AG04450 (cell line): ENCODE measurements at regions of chr1 and their contacts with region 1.

Region 1: DNA sequence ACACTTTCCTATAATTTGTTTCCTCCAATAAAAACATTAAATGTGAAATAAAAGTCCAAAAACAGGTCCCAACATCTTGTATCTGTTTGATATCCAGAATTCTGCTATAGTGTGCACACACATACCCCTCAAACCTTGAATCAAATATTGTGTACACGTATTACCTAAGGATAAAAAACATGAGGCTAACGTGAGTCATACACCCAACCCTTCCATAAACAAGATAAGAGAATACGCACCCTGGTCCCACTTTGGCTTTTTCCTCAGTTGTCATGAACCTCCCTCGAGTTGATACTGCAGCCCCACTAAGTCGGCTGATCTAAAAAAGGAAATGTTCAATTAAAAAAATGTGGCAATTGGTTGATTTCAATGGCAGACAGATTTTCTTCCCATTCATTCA is 5.2 kb downstream of the KHDC4 start:
- DNase-seq: no peak
- H3K4me3 ChIP-seq: no peak overlapping the region
- H3K27ac ChIP-seq: no peak overlapping the region
- H3K27me3 ChIP-seq: no peaks in the 10 kb centered on the region
- CTCF ChIP-seq: no peak

Region 2: GRCh38 chr1:155897746-155898145 is 31.3 kb before region 1 on chr1:
- CTCF ChIA-PET with region 1: no interaction called
- POLR2A ChIA-PET with region 1: no interaction called
- DNase-seq: no peak
- H3K4me3 ChIP-seq: no peak overlapping the region
- H3K27ac ChIP-seq: no peak overlapping the region
- H3K27me3 ChIP-seq: no peaks in the 10 kb centered on the region
- CTCF ChIP-seq: no peak

Region 3: DNA sequence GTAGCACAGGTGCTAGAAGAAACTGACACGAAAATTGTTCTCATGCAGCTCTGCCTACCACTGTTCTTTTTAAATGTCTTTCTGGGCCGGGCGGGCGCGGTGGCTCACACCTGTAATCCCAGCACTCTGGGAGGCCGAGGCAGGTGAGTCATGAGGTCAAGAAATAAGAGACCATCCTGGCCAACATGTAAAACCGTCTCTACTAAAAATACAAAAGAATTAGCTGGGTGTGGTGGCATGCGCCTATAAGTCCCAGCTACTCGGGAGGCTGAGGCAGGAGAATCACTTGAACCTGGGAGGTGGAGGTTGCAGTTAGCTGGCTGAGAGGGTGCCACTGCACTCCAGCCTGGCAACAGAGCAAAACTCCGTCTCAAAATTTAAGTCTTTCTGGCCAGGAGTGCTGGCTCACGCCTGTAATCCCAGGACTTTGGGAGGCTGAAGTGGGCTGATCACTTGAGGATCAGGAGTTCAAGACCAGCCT is 17.0 kb before region 1 on chr1:
- CTCF ChIA-PET with region 1: no interaction called
- POLR2A ChIA-PET with region 1: interaction called, 13 read pairs
- DNase-seq: no peak
- H3K4me3 ChIP-seq: no peak overlapping the region
- H3K27ac ChIP-seq: peak overlapping the region; percentile 39
- H3K27me3 ChIP-seq: no peaks in the 10 kb centered on the region
- CTCF ChIP-seq: no peak